ENCODE measurements at regions of chr10 and their contacts with region 1.

Region 1: DNA sequence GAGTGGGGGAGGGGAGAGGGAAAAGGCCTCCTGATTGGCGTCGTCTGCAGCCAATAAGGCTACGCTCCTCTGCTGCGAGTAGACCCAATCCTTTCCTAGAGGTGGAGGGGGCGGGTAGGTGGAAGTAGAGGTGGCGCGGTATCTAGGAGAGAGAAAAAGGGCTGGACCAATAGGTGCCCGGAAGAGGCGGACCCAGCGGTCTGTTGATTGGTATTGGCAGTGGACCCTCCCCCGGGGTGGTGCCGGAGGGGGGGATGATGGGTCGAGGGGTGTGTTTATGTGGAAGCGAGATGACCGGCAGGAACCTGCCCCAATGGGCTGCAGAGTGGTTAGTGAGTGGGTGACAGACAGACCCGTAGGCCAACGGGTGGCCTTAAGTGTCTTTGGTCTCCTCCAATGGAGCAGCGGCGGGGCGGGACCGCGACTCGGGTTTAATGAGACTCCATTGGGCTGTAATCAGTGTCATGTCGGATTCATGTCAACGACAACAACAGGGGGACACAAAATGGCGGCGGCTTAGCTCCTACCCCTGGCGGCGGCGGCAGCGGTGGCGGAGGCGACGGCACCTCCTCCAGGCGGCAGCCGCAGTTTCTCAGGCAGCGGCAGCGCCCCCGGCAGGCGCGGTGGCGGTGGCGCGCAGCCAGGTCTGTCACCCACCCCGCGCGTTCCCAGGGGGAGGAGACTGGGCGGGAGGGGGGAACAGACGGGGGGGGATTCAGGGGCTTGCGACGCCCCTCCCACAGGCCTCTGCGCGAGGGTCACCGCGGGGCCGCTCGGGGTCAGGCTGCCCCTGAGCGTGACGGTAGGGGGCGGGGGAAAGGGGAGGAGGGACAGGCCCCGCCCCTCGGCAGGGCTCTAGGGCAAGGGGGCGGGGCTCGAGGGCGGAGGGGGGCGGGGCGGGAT is at the start of gene KAT6B:
- DNase-seq: peak; percentile 98
- ATAC-seq: peak; percentile 81
- H3K4me3 Mint-ChIP-seq: peak within 1 kb of the TSS; percentile 88
- H3K27ac Mint-ChIP-seq: peak within 1 kb of the TSS; percentile 96
- H3K4me1 Mint-ChIP-seq: peaks cover 44% of the 10 kb centered on the region
- H3K27me3 Mint-ChIP-seq: no peaks in the 10 kb centered on the region
- CTCF ChIP-seq: no peak
- total RNA-seq, gene KAT6B: 39.6 and 45.2 TPM in 2 replicates

Region 2: DNA sequence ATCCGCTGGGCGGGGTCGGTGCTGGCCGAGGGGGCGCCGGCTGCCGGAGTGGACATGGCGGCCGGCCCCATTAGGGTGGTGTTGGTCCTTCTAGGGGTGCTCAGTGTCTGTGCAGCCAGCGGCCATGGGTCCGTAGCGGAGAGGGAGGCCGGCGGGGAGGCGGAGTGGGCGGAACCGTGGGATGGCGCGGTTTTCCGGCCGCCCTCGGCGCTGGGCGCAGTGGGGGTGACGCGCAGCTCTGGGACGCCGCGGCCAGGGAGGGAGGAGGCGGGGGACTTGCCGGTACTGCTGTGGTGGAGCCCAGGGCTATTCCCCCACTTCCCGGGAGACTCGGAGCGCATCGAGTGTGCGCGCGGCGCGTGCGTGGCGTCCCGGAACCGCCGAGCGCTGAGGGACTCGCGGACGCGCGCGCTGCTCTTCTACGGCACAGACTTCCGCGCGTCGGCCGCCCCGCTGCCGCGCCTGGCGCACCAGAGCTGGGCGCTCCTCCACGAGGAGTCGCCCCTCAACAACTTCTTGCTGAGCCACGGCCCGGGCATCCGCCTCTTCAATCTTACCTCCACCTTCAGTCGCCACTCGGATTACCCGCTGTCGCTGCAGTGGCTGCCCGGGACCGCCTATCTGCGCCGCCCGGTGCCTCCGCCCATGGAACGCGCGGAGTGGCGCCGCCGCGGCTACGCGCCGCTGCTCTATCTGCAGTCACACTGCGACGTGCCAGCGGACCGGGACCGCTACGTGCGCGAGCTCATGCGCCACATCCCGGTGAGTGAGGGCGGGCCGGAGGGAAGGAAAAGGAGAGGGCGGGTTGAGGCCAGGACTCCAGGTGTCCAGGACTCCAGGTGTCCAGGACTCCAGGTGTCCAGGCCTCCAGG is 1053.9 kb before region 1 on chr10:
- CTCF ChIA-PET with region 1: no interaction called
- POLR2A ChIA-PET with region 1: no interaction called
- intact Hi-C with region 1: loop called (anchors 5 kb)
- DNase-seq: peak; percentile 80
- ATAC-seq: peak; percentile 67
- H3K4me3 Mint-ChIP-seq: peak overlapping the region; percentile 91
- H3K27ac Mint-ChIP-seq: peak overlapping the region; percentile 91
- H3K4me1 Mint-ChIP-seq: peaks cover 64% of the 10 kb centered on the region
- H3K27me3 Mint-ChIP-seq: no peaks in the 10 kb centered on the region
- CTCF ChIP-seq: no peak

Region 3: DNA sequence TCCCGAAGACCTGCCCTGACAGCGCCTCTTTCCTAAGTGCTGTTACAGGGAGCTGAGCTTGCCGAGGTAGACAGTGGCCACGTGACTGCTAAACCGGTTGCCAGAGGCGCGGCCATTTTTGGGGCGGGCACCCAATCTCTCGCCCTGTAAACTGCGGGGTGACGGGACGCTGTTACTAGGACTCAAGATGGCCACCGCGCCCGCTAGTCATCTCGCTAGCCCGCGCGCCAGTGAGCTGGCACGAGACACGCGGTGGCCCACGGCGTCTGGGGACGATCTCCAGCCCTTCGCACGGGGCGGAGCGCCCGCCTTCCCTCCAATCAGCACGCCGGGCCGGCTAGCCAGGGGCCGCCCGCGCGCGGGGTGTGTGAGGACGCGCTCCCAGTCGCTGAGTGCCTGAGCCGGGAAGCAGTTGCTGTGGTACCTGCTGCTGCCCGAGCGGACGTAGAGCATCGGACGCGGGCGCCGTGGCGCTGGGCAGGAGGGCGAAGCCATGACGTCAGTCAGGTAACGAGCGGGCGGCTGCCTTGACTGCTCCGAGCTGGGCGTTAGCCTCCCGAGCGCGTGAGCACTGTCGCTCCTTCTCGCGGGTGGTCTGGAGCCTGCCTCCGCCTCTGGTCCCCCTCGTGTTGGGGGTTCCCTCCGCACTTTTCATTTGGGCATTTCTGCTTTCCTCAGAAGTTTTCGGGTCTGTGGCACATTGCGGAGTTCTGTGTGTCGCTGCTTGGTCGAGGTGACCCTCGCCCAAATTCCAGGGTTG is 649.8 kb before region 1 on chr10:
- CTCF ChIA-PET with region 1: no interaction called
- POLR2A ChIA-PET with region 1: no interaction called
- intact Hi-C with region 1: loop called (anchors 1 kb)
- DNase-seq: peak; percentile 92
- ATAC-seq: peak; percentile 90
- H3K4me3 Mint-ChIP-seq: peak overlapping the region; percentile 92
- H3K27ac Mint-ChIP-seq: peak overlapping the region; percentile 97
- H3K4me1 Mint-ChIP-seq: peaks cover 55% of the 10 kb centered on the region
- H3K27me3 Mint-ChIP-seq: no peaks in the 10 kb centered on the region
- CTCF ChIP-seq: no peak

Region 4: DNA sequence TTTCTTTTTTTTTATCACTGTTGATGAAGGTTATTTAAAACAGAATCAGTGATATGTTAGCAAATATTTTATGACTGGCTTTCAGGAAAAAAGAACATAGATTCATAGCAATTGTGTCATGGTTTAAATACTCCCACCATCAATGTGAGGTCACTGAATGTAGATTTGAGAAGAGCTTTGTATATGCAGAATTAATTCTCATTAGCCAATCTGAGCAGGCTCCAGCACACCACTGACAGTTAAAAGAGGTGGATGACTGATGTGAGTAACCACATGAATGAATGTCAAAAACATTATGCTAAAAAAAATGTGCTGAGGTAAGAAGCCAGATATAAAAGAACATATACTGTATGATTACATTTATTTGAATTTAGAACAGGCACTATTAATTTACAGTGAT is 174.8 kb before region 1 on chr10:
- CTCF ChIA-PET with region 1: no interaction called
- POLR2A ChIA-PET with region 1: no interaction called
- intact Hi-C with region 1: no loop called
- DNase-seq: no peak
- ATAC-seq: no peak
- H3K4me3 Mint-ChIP-seq: no peak overlapping the region
- H3K27ac Mint-ChIP-seq: no peak overlapping the region
- H3K4me1 Mint-ChIP-seq: no peaks in the 10 kb centered on the region
- H3K27me3 Mint-ChIP-seq: no peaks in the 10 kb centered on the region
- CTCF ChIP-seq: no peak

Region 5: GRCh38 chr10:74683621-74684364 is 142.6 kb before region 1 on chr10:
- CTCF ChIA-PET with region 1: no interaction called
- POLR2A ChIA-PET with region 1: interaction called, 14 read pairs
- intact Hi-C with region 1: no loop called
- DNase-seq: no peak
- ATAC-seq: no peak
- H3K4me3 Mint-ChIP-seq: no peak overlapping the region
- H3K27ac Mint-ChIP-seq: peak overlapping the region; percentile 32
- H3K4me1 Mint-ChIP-seq: peaks cover 17% of the 10 kb centered on the region
- H3K27me3 Mint-ChIP-seq: no peaks in the 10 kb centered on the region
- CTCF ChIP-seq: no peak

Region 6: DNA sequence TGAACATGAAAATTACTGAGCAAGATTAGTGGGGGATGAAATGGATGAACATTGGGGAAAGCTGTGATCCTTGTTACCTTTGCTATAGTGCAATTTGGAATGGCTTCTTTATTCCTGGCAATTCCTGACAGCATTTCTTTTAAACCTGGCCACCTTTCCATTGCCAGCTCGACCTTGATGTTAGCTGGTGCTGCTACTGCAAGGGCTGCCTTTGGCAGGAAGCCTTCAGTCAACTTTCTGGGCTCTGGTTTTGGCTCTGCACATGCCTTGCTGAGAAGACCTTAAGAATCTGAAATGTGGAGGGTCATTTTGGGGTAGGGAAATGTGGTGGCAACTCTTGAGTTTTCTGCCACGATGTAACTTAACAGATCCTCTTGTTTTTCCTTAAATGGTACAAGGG is 64.7 kb after region 1 on chr10:
- CTCF ChIA-PET with region 1: no interaction called
- POLR2A ChIA-PET with region 1: no interaction called
- intact Hi-C with region 1: no loop called
- DNase-seq: no peak
- ATAC-seq: no peak
- H3K4me3 Mint-ChIP-seq: no peak overlapping the region
- H3K27ac Mint-ChIP-seq: no peak overlapping the region
- H3K4me1 Mint-ChIP-seq: peaks cover 35% of the 10 kb centered on the region
- H3K27me3 Mint-ChIP-seq: no peaks in the 10 kb centered on the region
- CTCF ChIP-seq: no peak

Region 7: GRCh38 chr10:74977913-74978847 is 151.8 kb after region 1 on chr10:
- CTCF ChIA-PET with region 1: no interaction called
- POLR2A ChIA-PET with region 1: interaction called, 21 read pairs
- intact Hi-C with region 1: loop called (anchors 1 kb)
- DNase-seq: no peak
- ATAC-seq: peak; percentile 83
- H3K4me3 Mint-ChIP-seq: peak overlapping the region; percentile 72
- H3K27ac Mint-ChIP-seq: peak overlapping the region; percentile 84
- H3K4me1 Mint-ChIP-seq: peaks cover 62% of the 10 kb centered on the region
- H3K27me3 Mint-ChIP-seq: no peaks in the 10 kb centered on the region
- CTCF ChIP-seq: no peak

Region 8: GRCh38 chr10:75235375-75236177 is 409.2 kb after region 1 on chr10 and contains the start of gene COMTD1:
- CTCF ChIA-PET with region 1: no interaction called
- POLR2A ChIA-PET with region 1: no interaction called
- intact Hi-C with region 1: loop called (anchors 1 kb)
- DNase-seq: peak; percentile 96
- ATAC-seq: peak; percentile 70
- H3K4me3 Mint-ChIP-seq: peak within 1 kb of the TSS; percentile 85
- H3K27ac Mint-ChIP-seq: peak within 1 kb of the TSS; percentile 83
- H3K4me1 Mint-ChIP-seq: peaks cover 19% of the 10 kb centered on the region
- H3K27me3 Mint-ChIP-seq: no peaks in the 10 kb centered on the region
- CTCF ChIP-seq: peak; percentile 99
- total RNA-seq, gene COMTD1: 13.2 and 15.4 TPM in 2 replicates

Measured in activated B cell treated with CpG ODN at 0.5 μM for 24 hours (primary cell).